ENCODE measurements at regions of chr17 and their contacts with region 1.

Region 1: GRCh38 chr17:37824534-37825485 is 80.0 kb upstream of the HNF1B start:
- ATAC-seq: peak; percentile 39 to 93 (median 72)
- H3K4me3 ChIP-seq: no peak overlapping the region
- H3K27ac ChIP-seq: no peak overlapping the region
- H3K4me1 ChIP-seq: no peaks in the 10 kb centered on the region

Region 2: DNA sequence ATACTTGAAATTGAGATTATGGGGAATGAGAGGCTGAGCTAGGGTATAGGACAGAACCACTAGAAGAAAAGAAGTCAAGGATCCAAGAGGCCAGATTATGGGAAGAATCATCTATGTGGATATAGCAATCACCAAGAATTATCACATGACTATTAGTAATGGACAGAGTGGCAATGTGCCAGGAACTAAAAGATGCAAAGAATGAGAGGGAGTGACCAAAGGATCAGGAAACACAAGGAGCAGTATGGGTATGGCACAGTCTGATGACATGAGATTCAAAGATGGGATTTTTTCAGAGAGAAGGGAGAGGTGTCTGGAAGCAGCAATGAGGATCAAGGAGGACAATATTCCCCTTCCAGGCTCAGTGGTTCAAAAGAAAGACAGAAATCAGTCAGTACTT is 663.9 kb before region 1 on chr17:
- in situ Hi-C with region 1: no loop called
- ATAC-seq: peak in 3 of 8 experiments; percentile 13 to 88 (median 80)
- H3K4me3 ChIP-seq: no peak overlapping the region
- H3K27ac ChIP-seq: no peak overlapping the region
- H3K4me1 ChIP-seq: peaks cover 10 to 23% of the 10 kb centered on the region in 2 donors

Region 3: DNA sequence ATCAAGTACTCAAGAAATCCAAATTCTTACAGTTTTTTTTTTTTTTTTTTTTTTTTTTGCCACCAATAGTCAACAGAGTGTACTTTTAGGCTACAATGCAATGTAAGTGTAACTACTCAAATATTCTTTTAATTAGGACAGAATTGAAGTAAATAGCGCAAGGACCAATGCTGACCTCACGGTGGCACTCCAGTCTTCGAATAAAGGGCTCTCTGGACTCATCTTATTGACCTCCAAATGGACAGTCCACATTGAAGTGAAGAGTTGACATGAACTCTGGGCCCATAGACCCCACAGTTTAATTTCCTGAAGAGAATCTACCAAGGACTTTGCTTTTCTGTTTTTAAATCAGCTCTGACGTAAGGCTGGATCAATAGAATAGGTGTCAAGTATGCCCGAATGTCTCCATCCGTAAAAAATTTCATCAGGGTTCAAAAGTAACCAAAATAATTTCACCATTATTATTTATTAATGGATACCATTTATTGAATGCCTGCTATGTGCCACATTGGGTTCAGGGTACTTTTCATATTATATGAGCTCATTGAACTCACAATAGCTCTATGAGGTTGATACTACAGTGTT is 174.3 kb before region 1 on chr17:
- in situ Hi-C with region 1: loop called in 1 of 9 experiments (anchors 25 kb)
- ATAC-seq: peak in 7 of 8 experiments; percentile 31 to 74 (median 58)
- H3K4me3 ChIP-seq: no peak overlapping the region
- H3K27ac ChIP-seq: no peak overlapping the region
- H3K4me1 ChIP-seq: peaks cover 11 to 15% of the 10 kb centered on the region in 2 donors

Region 4: GRCh38 chr17:37725601-37726146 is 99.1 kb before region 1 on chr17:
- in situ Hi-C with region 1: no loop called
- ATAC-seq: peak in 1 of 8 experiments; percentile 18
- H3K4me3 ChIP-seq: no peak overlapping the region
- H3K27ac ChIP-seq: no peak overlapping the region
- H3K4me1 ChIP-seq: peaks cover 10 to 41% of the 10 kb centered on the region in 2 donors